ENCODE measurements at regions of chr1 and their contacts with region 1.

Region 1: DNA sequence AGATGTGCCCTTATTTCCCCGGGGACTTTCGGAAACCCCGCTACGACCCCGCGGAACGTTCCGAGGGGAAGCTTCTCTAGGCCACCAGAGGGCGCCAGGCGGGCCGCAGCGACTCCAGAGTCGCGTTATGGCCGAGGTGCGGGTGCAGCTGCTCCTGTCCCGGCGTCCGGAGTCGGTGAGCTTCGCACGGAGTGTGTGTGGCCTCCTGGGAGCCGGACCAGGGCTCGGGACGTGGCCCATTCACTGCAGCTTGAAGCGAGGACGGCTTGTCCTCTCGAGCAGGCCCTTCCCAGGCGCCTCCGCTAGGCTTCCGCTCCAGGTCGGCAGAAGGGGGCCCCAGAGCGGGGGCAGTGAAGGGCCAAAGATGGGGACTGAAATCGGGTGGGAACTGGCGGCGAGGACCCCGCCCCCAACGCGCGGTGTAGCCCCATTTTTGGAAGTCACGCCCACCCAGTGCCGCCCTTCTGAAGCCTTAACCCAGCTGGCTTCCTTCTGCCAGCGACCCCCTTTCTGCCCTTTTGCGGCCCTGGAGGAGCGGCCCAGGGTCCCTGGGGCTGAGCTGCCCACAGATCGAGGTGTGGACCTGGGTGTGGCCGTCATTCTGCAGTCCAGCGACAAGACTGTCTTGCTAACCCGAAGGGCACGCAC is at the start of gene NUDT17:
- DNase-seq: peak; percentile 83
- CTCF ChIP-seq: peak; percentile 89

Region 2: GRCh38 chr1:145708063-145708699 is 137.5 kb before region 1 on chr1:
- CTCF ChIA-PET with region 1: no interaction called
- POLR2A ChIA-PET with region 1: no interaction called
- DNase-seq: peak; percentile 55
- CTCF ChIP-seq: no peak

Region 3: GRCh38 chr1:145730900-145731299 is 114.7 kb before region 1 on chr1:
- CTCF ChIA-PET with region 1: no interaction called
- POLR2A ChIA-PET with region 1: no interaction called
- DNase-seq: no peak
- CTCF ChIP-seq: no peak

Region 4: DNA sequence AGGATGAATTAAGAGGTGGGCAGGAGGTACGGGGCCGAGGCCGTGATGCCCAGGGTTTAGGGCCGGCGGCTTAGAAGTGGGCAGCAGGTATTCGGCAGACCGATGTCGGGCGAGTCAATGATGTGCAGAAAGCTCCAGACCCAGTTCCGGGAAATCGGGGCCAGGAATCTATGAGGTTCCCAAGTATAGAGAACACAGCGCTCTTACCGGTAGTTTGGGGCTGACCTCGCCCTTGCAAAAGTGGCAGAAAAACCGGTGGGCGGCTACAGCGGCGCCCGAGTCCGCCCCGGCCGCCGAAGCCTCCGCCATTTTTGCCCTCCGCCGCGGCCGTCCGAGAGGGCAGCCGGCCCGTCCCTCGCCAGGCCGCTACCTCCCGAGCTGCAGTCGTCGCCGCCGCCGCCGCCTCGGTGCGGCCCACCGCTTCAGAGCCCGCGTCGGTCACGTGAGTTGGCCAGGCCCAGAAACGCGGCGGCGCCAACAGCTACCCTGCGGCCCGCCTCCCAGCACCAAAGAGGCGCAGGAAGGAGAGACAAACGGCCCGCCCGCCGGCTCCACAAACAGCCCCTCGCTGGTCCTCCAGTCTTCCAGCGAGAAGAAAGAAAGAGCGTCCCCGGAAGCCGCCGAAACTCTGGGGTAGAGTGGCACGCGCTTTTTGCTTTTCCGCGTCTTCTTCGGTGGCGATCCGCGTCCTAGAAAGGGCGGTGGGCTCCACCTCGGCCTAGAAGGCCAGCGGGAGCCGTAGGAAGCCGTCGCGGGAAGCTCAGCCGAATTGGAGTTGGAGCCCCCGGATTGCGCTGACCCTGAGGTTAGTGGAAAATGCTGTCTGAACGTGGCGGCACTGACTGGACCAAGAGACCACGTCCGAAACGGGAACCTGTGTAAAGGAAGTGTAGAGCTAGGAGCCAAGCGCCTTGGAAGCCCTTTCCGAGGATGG is 21.8 kb before region 1 on chr1 and contains the starts of genes POLR3C and RNF115:
- CTCF ChIA-PET with region 1: interaction called, 277 read pairs
- POLR2A ChIA-PET with region 1: no interaction called
- DNase-seq: peak; percentile 89
- CTCF ChIP-seq: no peak

Region 5: DNA sequence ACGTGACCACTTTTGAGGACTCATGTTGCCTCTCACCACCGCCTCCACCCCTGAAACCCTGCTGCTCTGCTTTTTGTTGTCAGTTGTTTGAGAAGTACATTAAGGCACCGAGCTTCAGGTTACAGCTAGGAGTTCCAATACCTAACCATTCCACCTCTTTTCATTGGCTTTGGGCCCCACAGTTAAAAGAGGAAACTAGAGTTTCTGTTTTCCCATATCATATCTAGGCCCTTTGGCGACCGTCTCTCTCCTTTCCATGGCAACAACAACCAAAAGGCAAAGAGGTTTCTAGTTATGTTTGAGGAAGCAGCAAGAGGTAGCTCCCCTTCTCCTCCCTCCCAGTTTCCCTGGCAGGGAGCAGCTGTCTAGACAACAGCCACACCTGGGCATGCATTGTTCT is 34.1 kb after region 1 on chr1:
- CTCF ChIA-PET with region 1: interaction called, 33 read pairs
- POLR2A ChIA-PET with region 1: no interaction called
- DNase-seq: no peak
- CTCF ChIP-seq: no peak

Region 6: DNA sequence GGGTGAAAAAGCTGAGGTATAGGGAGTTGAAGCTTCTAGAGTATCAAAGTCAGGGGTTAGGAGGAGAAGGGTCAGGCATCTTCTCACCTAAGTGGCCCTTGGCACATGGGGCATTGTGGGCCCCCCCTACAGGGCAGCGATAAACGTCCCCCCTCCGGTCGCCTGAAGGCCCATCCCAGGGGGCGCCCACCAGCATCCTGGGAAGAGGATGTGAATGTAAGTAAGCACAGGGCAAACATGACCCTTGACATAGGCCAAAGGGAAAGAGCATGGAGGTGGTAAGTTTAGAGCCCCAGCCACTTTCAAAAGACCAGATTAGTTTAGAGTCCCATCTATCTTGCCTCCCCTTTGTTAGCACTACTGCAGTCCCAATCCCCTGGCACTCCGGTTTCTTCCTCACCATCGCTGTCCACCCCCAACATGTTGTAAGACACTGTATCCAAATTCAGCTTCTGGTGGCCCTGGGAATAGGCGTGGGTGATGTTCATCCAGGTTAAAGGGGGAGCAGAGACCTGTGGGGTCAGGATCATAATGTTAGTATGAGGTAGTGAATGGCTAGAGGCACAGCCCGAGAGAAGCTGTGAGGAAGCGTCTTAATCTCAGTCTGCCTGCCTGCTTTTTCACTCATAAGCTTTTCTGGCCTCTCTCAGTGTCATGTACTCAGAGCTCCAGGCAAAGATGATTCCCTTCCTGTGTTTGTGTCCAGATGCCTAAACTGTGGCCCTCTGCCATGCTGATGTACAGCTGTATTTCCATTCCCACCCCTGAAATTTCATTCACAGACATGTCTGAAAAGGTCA is 61.5 kb after region 1 on chr1:
- CTCF ChIA-PET with region 1: interaction called, 107 read pairs
- POLR2A ChIA-PET with region 1: interaction called, 3 read pairs
- DNase-seq: no peak
- CTCF ChIP-seq: no peak

Region 7: GRCh38 chr1:146007506-146008133 is 162.0 kb after region 1 on chr1:
- CTCF ChIA-PET with region 1: interaction called, 53 read pairs
- POLR2A ChIA-PET with region 1: no interaction called
- DNase-seq: no peak
- CTCF ChIP-seq: no peak

Region 8: GRCh38 chr1:146036965-146037646 is 191.5 kb after region 1 on chr1:
- CTCF ChIA-PET with region 1: interaction called, 12 read pairs
- POLR2A ChIA-PET with region 1: no interaction called
- DNase-seq: peak; percentile 58
- CTCF ChIP-seq: no peak

Measured in GM10248 (cell line).